ENCODE measurements at regions of chrX and their contacts with region 1.

Region 1: DNA sequence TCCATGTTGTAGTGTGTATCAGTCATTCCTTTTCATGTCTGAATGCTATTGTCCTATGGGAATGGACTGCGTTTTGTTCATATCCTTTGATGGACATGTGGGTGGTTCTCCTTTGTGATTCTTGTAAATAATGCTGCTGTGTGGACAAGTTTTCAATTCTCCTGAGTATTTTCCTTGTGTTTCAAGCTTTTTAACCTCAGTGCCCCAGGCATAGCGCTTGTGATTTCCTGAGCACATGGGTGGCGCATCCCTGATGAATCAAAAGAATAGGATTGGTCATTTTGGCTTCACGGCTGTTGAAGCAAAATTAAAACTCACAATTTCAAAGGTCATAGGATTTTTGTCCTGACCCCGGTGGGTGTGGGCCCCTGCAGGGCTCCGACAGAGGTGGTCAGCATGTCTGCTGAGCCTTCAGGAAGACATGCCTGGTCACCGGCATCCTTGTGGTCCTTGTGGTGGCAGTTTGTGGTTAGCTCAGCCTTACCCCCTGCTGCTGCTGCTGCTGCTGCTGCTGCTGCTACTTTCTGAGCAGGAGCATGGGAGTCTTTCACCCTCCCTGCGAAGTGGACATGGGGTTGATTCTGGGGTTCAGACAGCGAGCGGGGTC is 30.0 kb downstream of the SHROOM2 start:
- DNase-seq: no peak

Region 2: GRCh38 chrX:9482408-9482807 is 333.8 kb before region 1 on chrX:
- intact Hi-C with region 1: no loop called
- DNase-seq: no peak

Region 3: DNA sequence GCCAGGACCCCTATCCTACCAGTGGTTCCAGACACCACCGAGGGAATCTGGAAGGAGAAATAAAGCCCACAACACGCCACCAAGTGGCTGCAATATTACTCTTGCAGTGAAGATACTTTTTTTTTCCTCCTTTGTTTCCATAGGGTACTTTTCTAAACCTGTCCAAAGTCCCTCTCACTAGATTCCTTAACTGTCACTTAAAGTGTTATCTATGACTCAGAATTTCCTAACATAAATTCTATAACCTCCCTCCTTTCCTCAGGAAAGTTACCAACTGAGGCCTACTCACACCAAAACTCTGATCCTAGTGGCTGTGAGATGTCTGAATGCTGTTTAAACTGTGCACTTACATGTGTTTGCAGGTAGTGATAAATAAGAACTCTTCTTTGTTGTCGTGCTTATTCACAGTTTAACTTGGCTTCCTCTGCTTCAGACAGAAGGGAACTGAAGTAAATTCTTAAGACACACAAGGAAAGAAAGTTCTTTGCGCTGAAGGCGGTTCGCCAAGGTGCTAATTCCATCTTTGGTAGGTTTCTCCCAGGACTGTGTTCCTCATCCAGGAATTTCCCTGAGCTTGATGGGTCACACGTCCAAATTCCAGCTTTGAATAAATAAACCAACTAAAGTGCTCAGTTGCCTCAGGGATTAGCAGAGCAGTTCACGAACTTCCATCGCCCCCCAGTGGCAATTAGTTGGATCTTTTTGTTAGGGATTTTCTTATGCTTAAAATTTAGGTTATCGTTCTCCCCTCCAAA is 1284.3 kb after region 1 on chrX:
- intact Hi-C with region 1: loop called in 1 of 2 experiments (anchors 5 kb)
- DNase-seq: no peak